OCI-LY7 (cell line): ENCODE measurements at regions of chr2 and their contacts with region 1.

Region 1: DNA sequence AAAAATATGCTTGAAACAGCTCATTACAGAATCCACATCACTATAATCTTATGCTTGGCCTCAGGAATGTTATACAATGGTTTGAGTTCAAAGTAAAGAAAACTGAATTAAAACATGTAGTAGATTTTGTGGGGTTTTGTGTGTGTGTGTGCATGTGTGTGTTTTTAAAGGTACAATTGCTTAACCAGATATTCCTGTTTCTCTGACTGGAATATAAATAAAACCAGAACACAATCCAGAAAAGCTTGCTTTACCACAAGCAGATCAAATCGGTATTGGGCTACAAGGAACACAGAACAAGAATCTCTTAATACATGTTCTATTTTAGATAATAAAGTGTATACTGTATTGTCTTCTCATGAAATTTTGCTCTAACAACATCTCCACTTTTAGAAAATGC is 110.0 kb downstream of the TMEM247 start:
- DNase-seq: no peak
- H3K4me3 ChIP-seq: no peak overlapping the region
- H3K27ac ChIP-seq: no peak overlapping the region
- H3K4me1 ChIP-seq: peaks cover 10% of the 10 kb centered on the region
- CTCF ChIP-seq: no peak

Region 2: DNA sequence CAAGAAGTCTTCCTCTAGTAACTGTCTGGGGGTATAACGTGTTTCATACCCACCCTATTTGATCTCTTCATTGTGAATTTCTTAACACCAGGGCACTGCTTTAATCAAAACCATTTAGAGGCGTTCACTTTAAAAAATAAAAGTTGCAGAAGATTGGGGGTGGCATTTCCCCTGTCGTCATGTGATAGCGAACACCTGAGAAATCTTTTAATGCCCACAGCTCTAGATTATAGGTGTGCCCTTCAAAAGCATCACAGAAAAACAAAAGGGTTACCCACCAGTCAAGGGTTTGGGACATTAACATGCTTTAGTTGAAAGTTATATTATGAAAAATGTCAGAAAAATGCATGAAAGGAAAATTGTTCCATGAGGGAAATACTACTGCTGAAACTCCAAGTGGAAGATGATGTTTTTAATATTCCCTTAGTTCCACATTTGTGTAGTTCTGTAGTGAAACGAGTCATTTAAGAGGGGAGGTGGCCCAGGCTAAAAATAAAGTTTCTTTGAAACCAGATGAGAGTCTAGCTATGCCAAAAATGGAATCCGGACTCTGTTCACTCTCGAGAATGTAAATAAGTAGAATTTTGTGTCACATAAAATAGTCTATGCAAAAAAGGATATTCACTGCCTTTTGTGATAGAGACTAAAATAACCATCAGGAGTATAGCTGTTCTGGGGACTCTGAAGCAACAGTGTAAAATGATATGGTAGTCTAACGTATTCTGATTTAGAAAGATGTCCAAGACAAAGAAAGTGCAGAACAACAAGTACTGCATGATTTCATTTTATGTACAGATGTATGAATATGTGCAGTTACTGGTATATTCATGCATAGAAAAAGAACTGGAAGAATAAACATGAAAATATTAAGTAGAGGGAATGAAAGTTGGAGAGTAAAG is 14.7 kb before region 1 on chr2:
- CTCF ChIA-PET with region 1: no interaction called
- POLR2A ChIA-PET with region 1: interaction called, 23 read pairs
- intact Hi-C with region 1: no loop called
- DNase-seq: peak; percentile 91
- H3K4me3 ChIP-seq: peak overlapping the region; percentile 57
- H3K27ac ChIP-seq: peak overlapping the region; percentile 100
- H3K4me1 ChIP-seq: peaks cover 82% of the 10 kb centered on the region
- CTCF ChIP-seq: no peak

Region 3: GRCh38 chr2:46601328-46601963 is 12.1 kb after region 1 on chr2:
- CTCF ChIA-PET with region 1: no interaction called
- POLR2A ChIA-PET with region 1: interaction called, 10 read pairs
- intact Hi-C with region 1: no loop called
- DNase-seq: peak; percentile 41
- H3K4me3 ChIP-seq: no peak overlapping the region
- H3K27ac ChIP-seq: no peak overlapping the region
- H3K4me1 ChIP-seq: peaks cover 11% of the 10 kb centered on the region
- CTCF ChIP-seq: peak; percentile 89

Region 4: DNA sequence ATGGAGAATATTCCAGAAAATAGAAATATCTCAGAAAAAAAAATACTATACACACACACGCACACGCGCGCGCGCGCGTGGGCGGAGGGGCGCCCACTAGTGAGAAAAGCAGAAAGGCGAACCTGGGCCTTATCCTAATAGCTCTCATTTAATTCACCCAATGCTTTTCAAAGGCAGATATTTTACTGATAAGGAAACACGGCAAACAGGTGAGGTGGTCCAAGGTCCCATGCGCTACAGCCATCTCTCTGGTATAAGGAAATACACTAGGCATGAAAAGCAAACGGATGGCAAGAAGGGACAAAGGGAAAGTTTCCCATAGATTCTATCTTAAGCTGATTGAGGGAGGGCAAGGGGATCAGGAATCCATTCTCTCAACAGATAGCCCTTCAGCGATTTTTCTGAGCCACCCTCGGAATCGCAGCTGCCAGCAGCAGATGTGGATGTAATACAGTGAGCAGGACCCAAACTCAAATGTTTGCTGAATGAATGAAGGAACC is 26.7 kb after region 1 on chr2:
- CTCF ChIA-PET with region 1: no interaction called
- POLR2A ChIA-PET with region 1: interaction called, 12 read pairs
- intact Hi-C with region 1: no loop called
- DNase-seq: peak; percentile 50
- H3K4me3 ChIP-seq: peak overlapping the region; percentile 83
- H3K27ac ChIP-seq: peak overlapping the region; percentile 74
- H3K4me1 ChIP-seq: peaks cover 35% of the 10 kb centered on the region
- CTCF ChIP-seq: peak; percentile 82

Region 5: DNA sequence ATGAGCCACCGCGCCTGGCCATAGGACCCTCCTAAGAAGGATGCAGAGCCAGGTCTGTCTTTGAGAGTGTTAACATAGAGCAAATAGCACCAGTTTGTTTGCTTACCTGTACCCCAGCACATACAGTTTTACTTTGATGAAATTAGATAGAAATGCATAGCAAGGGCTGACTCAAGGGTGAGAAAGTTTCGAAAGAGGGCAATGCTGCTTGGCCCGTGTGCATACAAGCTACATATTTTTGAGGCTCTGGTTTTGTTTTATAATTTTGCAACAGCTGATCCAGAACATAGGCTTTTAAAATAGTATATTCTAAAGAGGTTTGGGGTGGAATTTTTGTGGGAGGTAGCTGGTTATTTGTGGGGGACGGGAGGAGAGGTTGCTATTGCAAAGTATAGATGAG is 174.5 kb after region 1 on chr2:
- CTCF ChIA-PET with region 1: no interaction called
- POLR2A ChIA-PET with region 1: no interaction called
- intact Hi-C with region 1: no loop called
- DNase-seq: no peak
- H3K4me3 ChIP-seq: no peak overlapping the region
- H3K27ac ChIP-seq: no peak overlapping the region
- H3K4me1 ChIP-seq: no peaks in the 10 kb centered on the region
- CTCF ChIP-seq: no peak